ENCODE measurements at regions of chr19 and their contacts with region 1.

Region 1: GRCh38 chr19:40806488-40807468 is 7.8 kb downstream of the EGLN2 start:
- DNase-seq: peak; percentile 99
- H3K4me3 ChIP-seq: peak overlapping the region; percentile 20
- H3K27ac ChIP-seq: peak overlapping the region; percentile 47
- H3K4me1 ChIP-seq: peaks cover 53% of the 10 kb centered on the region
- H3K27me3 ChIP-seq: no peaks in the 10 kb centered on the region
- CTCF ChIP-seq: peak; percentile 100

Region 2: GRCh38 chr19:40716655-40717324 is 90.0 kb before region 1 on chr19 and contains the starts of genes COQ8B and ITPKC:
- CTCF ChIA-PET with region 1: no interaction called
- POLR2A ChIA-PET with region 1: no interaction called
- intact Hi-C with region 1: loop called (anchors 10 kb)
- DNase-seq: peak; percentile 99
- H3K4me3 ChIP-seq: peak within 1 kb of the TSS; percentile 68
- H3K27ac ChIP-seq: peak within 1 kb of the TSS; percentile 80
- H3K4me1 ChIP-seq: peaks cover 39% of the 10 kb centered on the region
- H3K27me3 ChIP-seq: no peaks in the 10 kb centered on the region
- CTCF ChIP-seq: no peak
- total RNA-seq, gene COQ8B: 34.1 and 38.8 TPM in 2 replicates
- total RNA-seq, gene ITPKC: 7.2 and 8.5 TPM in 2 replicates

Region 3: GRCh38 chr19:41089955-41090354 is 283.2 kb after region 1 on chr19:
- CTCF ChIA-PET with region 1: no interaction called
- POLR2A ChIA-PET with region 1: no interaction called
- intact Hi-C with region 1: no loop called
- DNase-seq: no peak
- H3K4me3 ChIP-seq: no peak overlapping the region
- H3K27ac ChIP-seq: no peak overlapping the region
- H3K4me1 ChIP-seq: no peaks in the 10 kb centered on the region
- H3K27me3 ChIP-seq: peaks cover 27% of the 10 kb centered on the region
- CTCF ChIP-seq: no peak

Measured in A673 (cell line).